HCT116 (cell line): ENCODE measurements at regions of chr12 and their contacts with region 1.

Region 1: DNA sequence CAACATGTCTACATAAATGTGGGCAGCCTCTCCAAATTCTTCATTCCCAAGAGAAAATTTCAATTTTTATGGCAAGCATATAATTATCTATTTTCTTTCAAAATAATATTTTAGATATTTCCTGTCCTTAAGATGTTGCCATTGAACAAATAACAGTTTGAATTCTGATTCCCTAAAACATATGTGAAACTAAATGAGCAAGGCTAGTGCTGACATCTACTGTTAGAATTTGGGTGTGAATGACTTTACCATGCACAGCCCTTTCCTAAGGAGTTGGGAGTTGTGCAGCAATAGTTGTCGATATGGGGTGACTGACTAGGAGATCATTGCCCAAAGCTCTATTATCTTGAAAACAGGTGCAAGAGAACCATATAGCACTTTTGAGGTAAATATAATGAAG is 108.2 kb upstream of the SLC38A4 start:
- DNase-seq: no peak
- ATAC-seq: peak; percentile 82
- H3K4me3 ChIP-seq: no peak overlapping the region
- H3K27ac ChIP-seq: no peak overlapping the region
- H3K4me1 ChIP-seq: peaks cover 5 to 9% of the 10 kb centered on the region in 2 experiments; a peak in 2 of 4 replicates
- H3K27me3 ChIP-seq: no peaks in the 10 kb centered on the region
- CTCF ChIP-seq: peak; percentile 40 to 62 (median 48); a peak in 5 of 6 replicates
- POLR2A ChIP-seq: no peak
- RAD21 ChIP-seq: peak; percentile 79

Region 2: GRCh38 chr12:46071769-46072624 is 862.0 kb before region 1 on chr12:
- CTCF ChIA-PET with region 1: no interaction called
- POLR2A ChIA-PET with region 1: no interaction called
- RAD21 ChIA-PET with region 1: no interaction called
- intact Hi-C with region 1: loop called (anchors 5 kb)
- DNase-seq: peak; percentile 58
- ATAC-seq: peak; percentile 93
- H3K4me3 ChIP-seq: no peak overlapping the region
- H3K27ac ChIP-seq: peak overlapping the region; percentile 9; the same call in 1 of the 2 replicates
- H3K4me1 ChIP-seq: peaks cover 0 to 12% of the 10 kb centered on the region in 2 experiments; a peak in 3 of 4 replicates
- H3K27me3 ChIP-seq: no peaks in the 10 kb centered on the region
- CTCF ChIP-seq: peak; percentile 77 to 99 (median 98)
- POLR2A ChIP-seq: no peak
- RAD21 ChIP-seq: peak; percentile 91

Region 3: GRCh38 chr12:47591361-47591791 is 657.4 kb after region 1 on chr12:
- CTCF ChIA-PET with region 1: no interaction called
- POLR2A ChIA-PET with region 1: no interaction called
- RAD21 ChIA-PET with region 1: no interaction called
- intact Hi-C with region 1: no loop called
- DNase-seq: no peak
- ATAC-seq: no peak
- H3K4me3 ChIP-seq: no peak overlapping the region
- H3K27ac ChIP-seq: no peak overlapping the region
- H3K4me1 ChIP-seq: no peaks in the 10 kb centered on the region
- H3K27me3 ChIP-seq: no peaks in the 10 kb centered on the region
- CTCF ChIP-seq: no peak
- POLR2A ChIP-seq: no peak
- RAD21 ChIP-seq: no peak